Activated T-helper 2 cell treated with anti-CD3 and anti-CD28 coated beads, Interferon-gamma antibody, Interleukin-2, Interleukin-4, amounts not matched to agents 10 μg/mL and 5 μg/mL and 100 μg/mL, durations not matched to agents 14 hours and 24 hours and 36 hours (primary cell): ENCODE measurements at regions of chrX and their contacts with region 1.

Region 1: GRCh38 chrX:140918407-140919038 is 83.9 kb upstream of the SPANXB1 start:
- DNase-seq: peak; percentile 33
- H3K4me3 Mint-ChIP-seq: no peak overlapping the region
- H3K27ac Mint-ChIP-seq: peak overlapping the region; percentile 92
- H3K4me1 Mint-ChIP-seq: peaks cover 17% of the 10 kb centered on the region
- H3K27me3 Mint-ChIP-seq: no peaks in the 10 kb centered on the region

Region 2: GRCh38 chrX:140762061-140762460 is 156.5 kb before region 1 on chrX:
- intact Hi-C with region 1: loop called (anchors 5 kb)
- DNase-seq: no peak
- H3K4me3 Mint-ChIP-seq: no peak overlapping the region
- H3K27ac Mint-ChIP-seq: no peak overlapping the region
- H3K4me1 Mint-ChIP-seq: no peaks in the 10 kb centered on the region
- H3K27me3 Mint-ChIP-seq: peaks cover 12% of the 10 kb centered on the region

Region 3: DNA sequence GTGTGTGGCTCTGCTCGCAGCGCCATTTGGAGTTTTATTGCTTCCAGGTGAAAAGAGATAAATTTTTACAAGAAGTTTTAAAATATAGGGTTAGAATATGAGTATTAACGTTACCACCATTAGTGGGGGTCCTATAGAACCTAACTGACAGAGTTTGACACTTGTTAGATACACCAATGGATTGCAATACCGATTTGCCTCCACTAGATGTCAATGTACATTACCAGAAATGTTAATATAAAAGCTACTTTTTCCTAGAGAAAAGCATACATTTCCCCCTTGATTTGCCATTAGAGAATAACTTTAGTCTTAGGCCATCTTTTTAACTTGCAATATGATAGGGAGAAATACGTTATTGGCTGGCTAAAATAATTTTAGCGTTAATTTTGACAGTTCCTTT is 100.6 kb before region 1 on chrX:
- intact Hi-C with region 1: loop called (anchors 1 kb)
- DNase-seq: no peak
- H3K4me3 Mint-ChIP-seq: no peak overlapping the region
- H3K27ac Mint-ChIP-seq: no peak overlapping the region
- H3K4me1 Mint-ChIP-seq: peaks cover 7% of the 10 kb centered on the region
- H3K27me3 Mint-ChIP-seq: no peaks in the 10 kb centered on the region

Region 4: DNA sequence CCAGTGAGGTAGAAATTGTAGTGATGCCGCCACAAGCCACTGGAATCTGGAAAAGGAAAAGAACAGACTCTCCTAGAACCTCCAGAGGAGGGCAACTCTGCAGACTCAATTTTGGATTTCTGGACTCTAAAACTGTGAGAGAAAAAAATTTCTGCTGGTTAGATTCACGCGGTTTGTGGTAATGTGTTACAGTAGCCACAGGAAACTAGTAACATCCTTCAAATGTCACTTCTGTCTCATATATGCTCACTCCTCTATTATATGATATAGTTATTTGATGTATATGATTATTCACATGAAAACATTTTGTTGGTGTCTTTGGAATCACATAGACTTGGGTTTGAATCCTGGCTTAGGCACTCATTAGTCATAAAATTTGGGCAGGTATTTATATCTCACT is 239.6 kb after region 1 on chrX:
- intact Hi-C with region 1: loop called (anchors 10 kb)
- DNase-seq: no peak
- H3K4me3 Mint-ChIP-seq: no peak overlapping the region
- H3K27ac Mint-ChIP-seq: no peak overlapping the region
- H3K4me1 Mint-ChIP-seq: peaks cover 7% of the 10 kb centered on the region
- H3K27me3 Mint-ChIP-seq: no peaks in the 10 kb centered on the region